ENCODE measurements at regions of chr11 and their contacts with region 1.

Region 1: GRCh38 chr11:73661035-73661628 is 14.8 kb downstream of the PLEKHB1 start:
- DNase-seq: peak; percentile 37
- ATAC-seq: peak; percentile 98
- H3K4me3 ChIP-seq: no peak overlapping the region; the same call in 1 of the 2 replicates
- H3K27ac ChIP-seq: no peak overlapping the region
- H3K4me1 ChIP-seq: no peaks in the 10 kb centered on the region
- H3K27me3 ChIP-seq: no peaks in the 10 kb centered on the region
- CTCF ChIP-seq: peak; percentile 96 to 99 (median 98)
- EP300 ChIP-seq: no peak
- POLR2A ChIP-seq: no peak
- RAD21 ChIP-seq: peak; percentile 98

Region 2: GRCh38 chr11:73393479-73394380 is 267.4 kb before region 1 on chr11:
- CTCF ChIA-PET with region 1: interaction called, 13 read pairs
- POLR2A ChIA-PET with region 1: no interaction called
- RAD21 ChIA-PET with region 1: interaction called, 7 read pairs
- SMC1A ChIA-PET with region 1: interaction called, 7 read pairs
- in situ Hi-C with region 1: no loop called
- intact Hi-C with region 1: no loop called
- DNase-seq: no peak
- ATAC-seq: peak; percentile 84
- H3K4me3 ChIP-seq: no peak overlapping the region
- H3K27ac ChIP-seq: no peak overlapping the region
- H3K4me1 ChIP-seq: peaks cover 4% of the 10 kb centered on the region
- H3K27me3 ChIP-seq: no peaks in the 10 kb centered on the region
- CTCF ChIP-seq: peak; percentile 83 to 90 (median 88)
- EP300 ChIP-seq: no peak
- POLR2A ChIP-seq: no peak
- RAD21 ChIP-seq: peak; percentile 91

Region 3: DNA sequence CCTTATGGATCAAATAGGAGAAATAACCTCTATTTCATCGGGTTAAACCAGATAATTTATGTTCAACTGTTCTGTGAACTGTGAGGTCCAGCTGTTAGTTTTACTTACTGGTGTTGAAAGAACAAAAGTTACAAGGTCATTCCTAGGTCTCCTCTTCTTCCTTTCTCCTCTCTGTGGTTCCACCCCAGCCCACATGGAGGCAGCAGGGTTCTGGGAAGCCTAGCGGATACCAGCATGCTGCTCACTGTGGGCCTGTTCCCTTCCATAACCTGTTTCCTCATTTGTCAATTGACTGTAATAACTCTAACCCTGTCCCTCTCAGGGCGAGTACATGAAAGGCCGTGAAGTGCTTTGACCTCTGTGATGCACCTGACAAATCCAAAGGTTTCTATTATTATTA is 257.1 kb before region 1 on chr11:
- CTCF ChIA-PET with region 1: interaction called, 50 read pairs
- POLR2A ChIA-PET with region 1: no interaction called
- RAD21 ChIA-PET with region 1: interaction called, 18 read pairs
- SMC1A ChIA-PET with region 1: interaction called, 31 read pairs
- in situ Hi-C with region 1: loop called (anchors 5 kb)
- intact Hi-C with region 1: loop called (anchors 1 kb)
- DNase-seq: no peak
- ATAC-seq: no peak
- H3K4me3 ChIP-seq: no peak overlapping the region
- H3K27ac ChIP-seq: no peak overlapping the region
- H3K4me1 ChIP-seq: no peaks in the 10 kb centered on the region
- H3K27me3 ChIP-seq: no peaks in the 10 kb centered on the region
- CTCF ChIP-seq: peak in 2 of 3 experiments; percentile 13 to 31; a peak in 3 of 6 replicates
- EP300 ChIP-seq: no peak
- POLR2A ChIP-seq: no peak
- RAD21 ChIP-seq: peak; percentile 47

Region 4: GRCh38 chr11:73414977-73415651 is 246.0 kb before region 1 on chr11:
- CTCF ChIA-PET with region 1: interaction called, 22 read pairs
- POLR2A ChIA-PET with region 1: no interaction called
- RAD21 ChIA-PET with region 1: no interaction called
- SMC1A ChIA-PET with region 1: interaction called, 5 read pairs
- in situ Hi-C with region 1: no loop called
- intact Hi-C with region 1: loop called (anchors 5 kb)
- DNase-seq: peak; percentile 38
- ATAC-seq: peak; percentile 69
- H3K4me3 ChIP-seq: no peak overlapping the region
- H3K27ac ChIP-seq: no peak overlapping the region; the same call in 1 of the 2 replicates
- H3K4me1 ChIP-seq: peaks cover 9% of the 10 kb centered on the region; the same call in 1 of the 2 replicates
- H3K27me3 ChIP-seq: no peaks in the 10 kb centered on the region
- CTCF ChIP-seq: no peak
- EP300 ChIP-seq: no peak
- POLR2A ChIP-seq: no peak
- RAD21 ChIP-seq: no peak

Region 5: GRCh38 chr11:73647459-73648100 is 13.6 kb before region 1 on chr11:
- CTCF ChIA-PET with region 1: interaction called, 25 read pairs
- POLR2A ChIA-PET with region 1: no interaction called
- RAD21 ChIA-PET with region 1: interaction called, 10 read pairs
- SMC1A ChIA-PET with region 1: interaction called, 6 read pairs
- in situ Hi-C with region 1: no loop called
- intact Hi-C with region 1: no loop called
- DNase-seq: peak; percentile 40
- ATAC-seq: peak; percentile 100
- H3K4me3 ChIP-seq: peak overlapping the region; percentile 8; the same call in 1 of the 2 replicates
- H3K27ac ChIP-seq: no peak overlapping the region
- H3K4me1 ChIP-seq: no peaks in the 10 kb centered on the region
- H3K27me3 ChIP-seq: no peaks in the 10 kb centered on the region
- CTCF ChIP-seq: no peak
- EP300 ChIP-seq: no peak
- POLR2A ChIP-seq: no peak
- RAD21 ChIP-seq: no peak

Region 6: GRCh38 chr11:73680687-73681086 is 19.6 kb after region 1 on chr11:
- CTCF ChIA-PET with region 1: interaction called, 12 read pairs
- POLR2A ChIA-PET with region 1: no interaction called
- RAD21 ChIA-PET with region 1: no interaction called
- SMC1A ChIA-PET with region 1: no interaction called
- in situ Hi-C with region 1: no loop called
- intact Hi-C with region 1: no loop called
- DNase-seq: no peak
- ATAC-seq: no peak
- H3K4me3 ChIP-seq: no peak overlapping the region
- H3K27ac ChIP-seq: no peak overlapping the region
- H3K4me1 ChIP-seq: no peaks in the 10 kb centered on the region
- H3K27me3 ChIP-seq: no peaks in the 10 kb centered on the region
- CTCF ChIP-seq: no peak
- EP300 ChIP-seq: no peak
- POLR2A ChIP-seq: no peak
- RAD21 ChIP-seq: no peak

Region 7: DNA sequence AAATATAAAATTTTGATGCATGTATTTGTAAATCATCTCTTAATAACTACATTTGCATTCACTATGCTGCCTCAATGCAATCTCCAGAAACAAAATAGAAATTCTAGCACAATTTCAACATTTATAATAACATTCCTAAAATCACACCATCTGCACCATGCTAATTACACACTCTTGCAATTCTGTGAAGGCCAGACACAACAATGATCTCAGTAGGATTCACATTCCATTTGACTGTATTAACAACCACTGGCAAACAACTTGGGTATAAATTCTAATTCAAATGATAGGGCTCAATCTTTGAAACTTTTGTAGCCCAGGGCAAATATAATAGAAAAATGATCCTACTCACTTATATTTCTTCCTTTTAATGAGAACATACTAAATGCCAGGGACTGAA is 73.9 kb after region 1 on chr11:
- CTCF ChIA-PET with region 1: no interaction called
- POLR2A ChIA-PET with region 1: no interaction called
- RAD21 ChIA-PET with region 1: no interaction called
- SMC1A ChIA-PET with region 1: no interaction called
- in situ Hi-C with region 1: no loop called
- intact Hi-C with region 1: no loop called
- DNase-seq: no peak
- ATAC-seq: no peak
- H3K4me3 ChIP-seq: no peak overlapping the region
- H3K27ac ChIP-seq: no peak overlapping the region
- H3K4me1 ChIP-seq: 0 out of 2 replicates have a peak, but pooled peaks cover 3% of the 10 kb centered on the region
- H3K27me3 ChIP-seq: no peaks in the 10 kb centered on the region
- CTCF ChIP-seq: no peak
- EP300 ChIP-seq: no peak
- POLR2A ChIP-seq: no peak
- RAD21 ChIP-seq: no peak

Region 8: GRCh38 chr11:73931039-73931645 is 270.0 kb after region 1 on chr11:
- CTCF ChIA-PET with region 1: interaction called, 12 read pairs
- POLR2A ChIA-PET with region 1: no interaction called
- RAD21 ChIA-PET with region 1: interaction called, 4 read pairs
- SMC1A ChIA-PET with region 1: interaction called, 3 read pairs
- in situ Hi-C with region 1: no loop called
- intact Hi-C with region 1: no loop called
- DNase-seq: no peak
- ATAC-seq: peak; percentile 78
- H3K4me3 ChIP-seq: no peak overlapping the region
- H3K27ac ChIP-seq: no peak overlapping the region
- H3K4me1 ChIP-seq: no peaks in the 10 kb centered on the region
- H3K27me3 ChIP-seq: no peaks in the 10 kb centered on the region
- CTCF ChIP-seq: peak in 2 of 3 experiments; percentile 37 to 60; a peak in 3 of 6 replicates
- EP300 ChIP-seq: no peak
- POLR2A ChIP-seq: no peak
- RAD21 ChIP-seq: peak; percentile 47; the same call in 1 of the 2 replicates

Region 9: DNA sequence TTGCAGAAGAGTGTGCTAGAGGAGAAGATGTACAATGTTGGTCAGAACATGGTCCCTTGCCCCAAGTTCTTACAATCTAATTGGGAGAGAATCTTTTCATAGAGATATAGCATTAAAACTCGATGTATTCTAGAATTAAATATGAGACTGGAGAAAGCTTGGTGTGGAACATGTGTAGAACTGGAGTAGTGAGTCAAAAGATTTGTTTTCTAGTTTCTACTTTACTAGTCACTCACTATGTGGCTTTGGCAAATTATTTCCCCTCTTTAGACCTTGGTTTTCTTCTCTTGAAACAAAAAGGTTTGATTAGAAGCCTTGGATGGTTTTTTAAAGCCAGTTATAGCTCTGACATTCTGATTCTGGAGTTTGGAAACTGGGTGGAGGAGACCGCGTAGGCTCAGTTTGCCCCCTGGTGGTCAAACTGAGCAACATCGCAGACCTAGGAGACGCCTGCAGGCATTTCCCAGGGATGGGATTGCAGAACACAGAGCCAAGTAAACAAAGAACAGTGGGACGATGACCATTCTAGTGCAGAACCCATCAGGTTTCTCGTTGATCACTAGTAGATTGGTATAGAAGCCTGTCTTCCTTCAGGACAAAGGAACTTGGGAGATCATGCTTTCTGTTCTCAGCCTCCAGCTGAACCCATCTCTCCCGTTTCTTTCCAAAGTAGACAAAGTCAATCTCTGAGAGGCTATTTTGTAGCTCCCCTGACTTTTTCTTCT is 1078.6 kb after region 1 on chr11:
- CTCF ChIA-PET with region 1: no interaction called
- POLR2A ChIA-PET with region 1: no interaction called
- RAD21 ChIA-PET with region 1: no interaction called
- SMC1A ChIA-PET with region 1: no interaction called
- in situ Hi-C with region 1: no loop called
- intact Hi-C with region 1: no loop called
- DNase-seq: no peak
- ATAC-seq: peak; percentile 93
- H3K4me3 ChIP-seq: no peak overlapping the region
- H3K27ac ChIP-seq: no peak overlapping the region
- H3K4me1 ChIP-seq: no peaks in the 10 kb centered on the region
- H3K27me3 ChIP-seq: peaks cover 0 to 2% of the 10 kb centered on the region in 2 experiments; a peak in 1 of 4 replicates
- CTCF ChIP-seq: peak; percentile 83 to 92 (median 89)
- EP300 ChIP-seq: no peak
- POLR2A ChIP-seq: no peak
- RAD21 ChIP-seq: peak; percentile 62